ENCODE measurements at regions of chr2 and their contacts with region 1.

Region 1: DNA sequence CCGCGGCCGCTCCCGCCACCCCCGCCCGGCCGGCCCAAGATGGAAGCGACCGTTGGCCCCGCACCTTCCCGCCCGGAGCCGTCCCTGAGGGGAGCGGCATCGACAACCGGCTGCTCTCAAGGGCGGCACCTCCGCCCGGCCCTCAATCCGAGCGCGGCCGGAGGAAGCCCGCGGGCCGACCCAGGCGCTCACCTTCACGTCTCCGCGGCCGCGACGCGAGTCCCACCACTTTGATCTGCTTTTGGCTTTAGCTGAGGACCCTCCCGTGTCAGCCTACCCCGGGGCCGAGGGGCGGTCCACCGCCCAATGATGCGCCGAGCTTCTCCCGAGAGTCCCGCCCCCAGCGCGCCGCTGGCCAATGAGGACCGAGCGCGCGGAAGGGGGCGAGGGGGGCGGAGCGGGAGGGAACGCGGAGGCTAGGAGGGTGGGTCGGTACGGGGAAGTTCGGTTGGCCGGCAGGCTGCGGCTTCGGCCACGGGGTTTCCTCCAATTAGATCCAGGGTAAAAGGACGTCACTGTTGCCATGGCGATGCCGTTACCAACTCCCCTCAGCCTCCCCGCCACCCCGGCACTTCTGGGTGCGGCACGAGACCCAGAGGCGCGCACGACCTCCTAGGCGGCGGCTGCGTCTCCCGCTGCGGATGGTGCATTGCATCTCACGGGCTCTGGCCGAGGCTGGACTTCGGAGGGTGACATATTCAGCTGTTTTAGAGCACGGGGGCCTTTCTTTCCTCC is at the start of gene YWHAQ:
- DNase-seq: peak; percentile 99
- ATAC-seq: peak; percentile 99
- H3K4me3 ChIP-seq: peak within 1 kb of the TSS; percentile 68 to 84
- H3K27ac ChIP-seq: peak within 1 kb of the TSS; percentile 49 to 96
- H3K4me1 ChIP-seq: peaks cover 0 to 3% of the 10 kb centered on the region in 2 donors
- H3K27me3 ChIP-seq: no peaks in the 10 kb centered on the region
- total RNA-seq, gene YWHAQ: 182 to 226 TPM

Region 2: DNA sequence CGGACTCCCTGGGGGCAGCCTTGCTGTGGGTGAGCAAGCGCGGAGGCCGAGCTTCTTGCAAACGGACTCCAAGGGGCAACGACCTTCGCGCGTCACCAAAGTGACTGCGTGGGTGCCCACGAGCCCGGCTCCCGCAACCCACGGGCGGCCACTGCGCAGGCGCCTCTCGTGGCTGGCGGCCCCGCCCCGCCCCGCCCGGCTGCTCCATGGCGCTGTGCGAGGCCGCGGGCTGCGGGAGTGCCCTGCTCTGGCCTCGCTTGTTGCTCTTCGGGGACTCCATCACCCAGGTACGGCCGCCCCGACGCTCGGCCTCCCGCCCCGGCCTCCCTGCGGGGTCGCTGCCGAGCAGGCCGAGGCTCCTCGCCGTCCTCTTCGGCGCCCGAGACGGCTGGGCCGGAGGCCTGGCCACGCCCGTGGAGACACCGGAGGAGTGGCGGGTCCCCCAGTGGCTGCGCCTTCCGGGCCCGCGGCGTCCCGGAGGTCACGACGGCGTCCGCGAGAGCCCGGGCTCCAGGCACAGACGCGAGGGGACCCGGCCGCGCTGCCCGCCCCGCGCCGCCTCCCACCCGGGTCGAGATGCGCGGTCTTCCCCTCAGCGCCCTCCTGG is 156.5 kb before region 1 on chr2 and contains the start of gene IAH1:
- intact Hi-C with region 1: loop called in 1 of 2 experiments (anchors 5 kb)
- DNase-seq: peak; percentile 75 to 90
- ATAC-seq: peak; percentile 88
- H3K4me3 ChIP-seq: peak within 1 kb of the TSS; percentile 60 to 67
- H3K27ac ChIP-seq: peak within 1 kb of the TSS; percentile 8 to 66
- H3K4me1 ChIP-seq: peaks cover 0 to 3% of the 10 kb centered on the region in 2 donors
- H3K27me3 ChIP-seq: no peaks in the 10 kb centered on the region
- total RNA-seq, gene IAH1: 45.6 to 52.2 TPM

Region 3: DNA sequence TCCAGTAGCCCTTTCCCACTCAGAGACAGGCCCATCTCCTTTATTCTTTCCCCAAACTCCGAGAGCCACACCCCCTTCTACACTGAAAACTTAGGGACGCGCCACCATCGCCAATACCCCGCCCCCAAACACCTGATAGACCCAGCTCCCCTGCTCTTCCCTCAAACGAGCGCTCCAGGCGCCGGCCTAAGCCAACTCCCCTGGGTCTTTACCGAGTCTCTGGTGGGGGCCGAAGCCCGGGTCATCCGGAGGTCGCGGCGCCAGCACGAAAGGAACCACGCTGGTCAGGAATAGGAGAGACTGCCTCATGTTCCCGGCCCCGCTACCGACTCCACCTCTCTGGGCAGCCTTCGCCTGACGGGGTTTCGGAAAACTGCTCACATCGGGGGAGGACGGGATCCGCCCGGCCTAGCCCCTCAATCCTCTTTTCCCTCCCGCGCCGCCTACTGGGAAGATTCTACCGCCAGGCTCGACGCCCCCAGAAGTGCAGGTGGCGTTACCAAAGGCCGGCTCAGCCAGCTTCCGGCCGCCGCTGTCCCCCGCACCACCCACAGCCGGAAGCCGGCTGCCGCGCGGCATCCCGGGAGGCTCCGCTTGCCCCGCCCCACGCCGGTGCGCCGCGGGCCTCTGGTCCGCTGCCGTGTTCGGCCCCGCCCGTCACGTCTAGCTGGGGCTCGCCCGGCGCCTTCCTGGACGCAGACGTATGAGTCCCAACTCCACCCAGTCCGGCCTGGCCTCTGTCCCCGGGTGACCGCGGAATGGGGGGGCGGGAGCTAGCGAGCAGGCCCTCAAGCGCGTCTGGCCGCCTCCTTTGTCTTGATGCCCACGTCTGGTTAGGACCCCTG is 75.4 kb before region 1 on chr2 and contains the start of gene ADAM17:
- intact Hi-C with region 1: loop called (anchors 2 to 5 kb)
- DNase-seq: peak; percentile 98 to 99
- ATAC-seq: peak; percentile 98
- H3K4me3 ChIP-seq: peak within 1 kb of the TSS; percentile 61 to 71
- H3K27ac ChIP-seq: peak within 1 kb of the TSS; percentile 87 to 98
- H3K4me1 ChIP-seq: peaks cover 0 to 2% of the 10 kb centered on the region in 2 donors
- H3K27me3 ChIP-seq: no peaks in the 10 kb centered on the region
- total RNA-seq, gene ADAM17: 42.7 to 47.0 TPM

Region 4: DNA sequence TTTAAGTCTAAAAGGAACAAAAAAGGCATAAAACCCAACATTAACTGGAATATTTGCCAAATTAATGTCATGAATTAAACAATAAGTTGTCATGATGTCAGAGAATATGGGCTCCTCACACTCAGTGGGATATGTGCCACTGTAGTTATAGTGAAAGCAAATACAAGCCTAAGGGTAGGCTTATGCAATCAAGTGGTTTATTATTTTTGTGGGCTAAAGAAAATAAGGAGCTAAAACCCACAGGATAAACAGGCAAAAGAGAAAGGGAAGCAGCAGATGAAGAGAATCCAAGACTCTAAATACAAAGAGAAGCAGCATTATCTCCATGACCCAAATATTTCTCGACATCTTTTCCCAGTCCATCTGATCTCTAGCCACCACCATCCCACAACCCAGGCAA is 17.6 kb before region 1 on chr2:
- intact Hi-C with region 1: loop called in 1 of 2 experiments (anchors 2 kb)
- DNase-seq: no peak
- ATAC-seq: no peak
- H3K4me3 ChIP-seq: no peak overlapping the region
- H3K27ac ChIP-seq: no peak overlapping the region
- H3K4me1 ChIP-seq: peaks cover 0 to 16% of the 10 kb centered on the region in 2 donors
- H3K27me3 ChIP-seq: no peaks in the 10 kb centered on the region

Region 5: GRCh38 chr2:9693211-9693520 is 62.2 kb after region 1 on chr2:
- intact Hi-C with region 1: loop called in 1 of 2 experiments (anchors 5 kb)
- DNase-seq: peak; percentile 89 to 92
- ATAC-seq: peak; percentile 81
- H3K4me3 ChIP-seq: no peak overlapping the region
- H3K27ac ChIP-seq: peak overlapping the region in 1 of 2 donors; percentile 55
- H3K4me1 ChIP-seq: no peaks in the 10 kb centered on the region
- H3K27me3 ChIP-seq: no peaks in the 10 kb centered on the region

Region 6: GRCh38 chr2:9757501-9758264 is 126.8 kb after region 1 on chr2:
- intact Hi-C with region 1: loop called in 1 of 2 experiments (anchors 5 kb)
- DNase-seq: peak in 1 of 2 donors; percentile 46
- ATAC-seq: peak; percentile 40
- H3K4me3 ChIP-seq: peak overlapping the region; percentile 10 to 28
- H3K27ac ChIP-seq: no peak overlapping the region
- H3K4me1 ChIP-seq: no peaks in the 10 kb centered on the region
- H3K27me3 ChIP-seq: no peaks in the 10 kb centered on the region

Measured in aorta (tissue), 5 donors.